Activated CD8-positive, alpha-beta T cell treated with anti-CD3 and anti-CD28 coated beads for 36 hours (primary cell): ENCODE measurements at regions of chr2 and their contacts with region 1.

Region 1: DNA sequence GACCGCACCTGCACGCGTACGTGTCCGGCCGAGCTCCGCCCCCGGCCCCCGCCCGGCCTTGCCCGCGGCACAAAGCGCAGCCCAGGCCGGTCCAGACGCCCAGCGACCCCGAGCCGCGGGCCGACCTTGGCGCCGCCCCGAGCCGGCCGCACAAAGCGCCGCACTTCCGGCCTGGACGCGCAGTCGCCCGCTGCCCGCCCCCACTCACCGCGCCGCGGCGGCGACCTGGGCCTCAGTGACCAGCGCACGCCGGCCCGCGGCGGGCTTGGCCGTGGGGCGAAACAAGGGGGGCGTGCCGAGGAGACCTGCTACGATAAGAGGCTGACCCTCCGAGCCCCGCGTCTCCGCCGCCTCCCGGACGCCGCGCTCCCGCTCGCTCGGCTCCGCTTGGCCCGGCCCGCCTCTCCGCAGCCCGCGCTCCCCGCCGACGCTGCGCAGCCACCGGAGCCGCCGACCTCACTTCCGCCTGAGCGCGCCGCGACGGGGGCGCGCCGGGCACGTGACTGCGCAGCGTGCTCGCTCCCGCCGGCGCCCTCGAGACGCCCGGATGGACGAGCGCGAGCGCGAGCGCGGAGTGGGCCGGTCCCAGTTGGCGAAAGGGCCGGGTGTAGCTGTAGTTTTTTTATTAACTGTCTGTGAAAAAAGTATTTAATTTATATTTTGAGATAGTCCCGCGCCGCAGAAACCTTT is at the start of gene FAM168B:
- DNase-seq: peak; percentile 87
- ATAC-seq: peak; percentile 84
- H3K4me3 Mint-ChIP-seq: peak within 1 kb of the TSS; percentile 87
- H3K27ac Mint-ChIP-seq: peak within 1 kb of the TSS; percentile 97
- H3K4me1 Mint-ChIP-seq: peaks cover 16% of the 10 kb centered on the region
- H3K27me3 Mint-ChIP-seq: no peaks in the 10 kb centered on the region
- CTCF ChIP-seq: no peak
- total RNA-seq, gene FAM168B: 62.8 to 66.6 TPM

Region 2: DNA sequence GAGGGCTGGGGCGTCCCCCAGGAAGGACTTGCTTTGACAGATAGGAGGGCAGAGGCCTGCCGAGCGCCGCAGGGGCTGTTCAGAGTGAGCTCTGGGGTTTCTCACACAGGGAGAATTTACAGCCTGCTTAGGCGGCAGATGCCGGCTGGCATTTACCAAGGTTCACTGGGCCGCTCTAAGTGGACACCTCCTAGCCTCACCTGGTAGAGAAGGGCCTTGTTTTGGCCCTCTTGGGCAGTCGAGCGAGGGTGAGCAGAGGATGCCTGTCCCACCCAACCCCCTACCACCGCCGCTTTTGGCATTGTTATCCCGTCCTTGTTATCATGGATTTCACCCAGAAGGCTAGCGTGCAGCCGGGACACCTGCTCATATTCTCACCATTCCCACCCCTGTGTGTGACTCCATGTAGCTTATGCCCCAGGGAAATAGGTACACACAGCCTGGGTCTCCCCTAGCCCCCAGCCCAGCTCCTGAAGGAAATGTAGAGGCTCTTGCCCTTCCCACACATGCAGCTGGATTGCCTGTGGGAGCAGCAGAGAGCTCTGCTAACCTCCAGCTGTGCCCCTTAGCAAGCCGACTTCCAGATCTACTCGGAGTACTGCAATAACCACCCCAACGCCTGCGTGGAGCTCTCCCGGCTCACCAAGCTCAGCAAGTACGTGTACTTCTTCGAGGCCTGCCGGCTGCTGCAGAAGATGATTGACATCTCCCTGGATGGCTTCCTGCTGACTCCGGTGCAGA is 52.3 kb before region 1 on chr2:
- CTCF ChIA-PET with region 1: interaction called, 6 read pairs
- POLR2A ChIA-PET with region 1: interaction called, 13 read pairs
- intact Hi-C with region 1: no loop called
- DNase-seq: peak; percentile 48
- ATAC-seq: peak; percentile 34
- H3K4me3 Mint-ChIP-seq: peak overlapping the region; percentile 71
- H3K27ac Mint-ChIP-seq: peak overlapping the region; percentile 50
- H3K4me1 Mint-ChIP-seq: peaks cover 38% of the 10 kb centered on the region
- H3K27me3 Mint-ChIP-seq: no peaks in the 10 kb centered on the region
- CTCF ChIP-seq: no peak

Region 3: GRCh38 chr2:131077182-131077846 is 15.8 kb before region 1 on chr2:
- CTCF ChIA-PET with region 1: interaction called, 4 read pairs
- POLR2A ChIA-PET with region 1: interaction called, 14 read pairs
- intact Hi-C with region 1: no loop called
- DNase-seq: no peak
- ATAC-seq: no peak
- H3K4me3 Mint-ChIP-seq: no peak overlapping the region
- H3K27ac Mint-ChIP-seq: peak overlapping the region; percentile 5
- H3K4me1 Mint-ChIP-seq: peaks cover 52% of the 10 kb centered on the region
- H3K27me3 Mint-ChIP-seq: no peaks in the 10 kb centered on the region
- CTCF ChIP-seq: no peak

Region 4: GRCh38 chr2:131105156-131105949 is 12.2 kb after region 1 on chr2 and contains the start of gene PLEKHB2:
- CTCF ChIA-PET with region 1: interaction called, 7 read pairs
- POLR2A ChIA-PET with region 1: interaction called, 53 read pairs
- intact Hi-C with region 1: no loop called
- DNase-seq: peak; percentile 91
- ATAC-seq: peak; percentile 75
- H3K4me3 Mint-ChIP-seq: peak within 1 kb of the TSS; percentile 88
- H3K27ac Mint-ChIP-seq: peak within 1 kb of the TSS; percentile 95
- H3K4me1 Mint-ChIP-seq: peaks cover 47% of the 10 kb centered on the region
- H3K27me3 Mint-ChIP-seq: no peaks in the 10 kb centered on the region
- CTCF ChIP-seq: no peak
- total RNA-seq, gene PLEKHB2: 47.3 to 49.4 TPM